Motor neuron (in vitro differentiated cells): ENCODE measurements at regions of chrX and their contacts with region 1.

Region 1: GRCh38 chrX:47217642-47218279 is 720 bp upstream of the CDK16 start:
- ATAC-seq: peak; percentile 61 to 89 (median 86)
- H3K4me3 ChIP-seq: peak overlapping the region; percentile 71 to 97 (median 80)
- H3K27ac ChIP-seq: peak overlapping the region; percentile 99 to 100
- H3K4me1 ChIP-seq: peaks cover 16 to 19% of the 10 kb centered on the region in 2 donors

Region 2: DNA sequence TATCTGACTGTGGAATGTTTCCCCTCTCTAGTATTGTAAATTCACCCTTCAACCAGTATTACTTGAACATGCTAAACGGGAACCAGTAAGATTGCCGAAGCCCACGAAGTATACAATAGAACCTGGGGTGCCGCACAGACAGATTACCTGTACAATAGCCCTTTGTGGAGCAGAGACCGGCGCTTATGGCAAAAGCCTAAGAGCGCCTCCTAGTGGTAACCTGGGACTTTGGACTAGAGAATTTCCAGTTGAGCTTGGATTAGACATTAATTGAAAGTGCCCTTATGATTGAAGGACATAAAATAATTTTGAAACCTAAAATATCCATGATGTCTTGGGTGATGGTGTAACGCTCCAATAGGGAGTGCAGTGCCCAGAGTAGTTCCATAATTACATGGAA is 166.7 kb after region 1 on chrX:
- in situ Hi-C with region 1: loop called in 3 of 9 experiments (anchors 25 kb)
- ATAC-seq: peak in 6 of 8 experiments; percentile 28 to 70 (median 50)
- H3K4me3 ChIP-seq: peak overlapping the region in 1 of 5 donors; percentile 11
- H3K27ac ChIP-seq: no peak overlapping the region
- H3K4me1 ChIP-seq: no peaks in the 10 kb centered on the region